ENCODE measurements at regions of chr1 and their contacts with region 1.

Region 1: GRCh38 chr1:30984165-30984889 is 75.8 kb upstream of the SDC3 start:
- DNase-seq: no peak
- ATAC-seq: no peak
- H3K4me3 ChIP-seq: no peak overlapping the region
- H3K4me3 Mint-ChIP-seq: no peak overlapping the region
- H3K27ac ChIP-seq: no peak overlapping the region
- H3K27ac Mint-ChIP-seq: no peak overlapping the region
- H3K4me1 ChIP-seq: peaks cover 8% of the 10 kb centered on the region
- H3K4me1 Mint-ChIP-seq: peaks cover 64% of the 10 kb centered on the region
- H3K27me3 ChIP-seq: no peaks in the 10 kb centered on the region
- H3K27me3 Mint-ChIP-seq: no peaks in the 10 kb centered on the region
- CTCF ChIP-seq: no peak

Region 2: GRCh38 chr1:30966690-30967369 is 17.5 kb before region 1 on chr1:
- CTCF ChIA-PET with region 1: no interaction called
- POLR2A ChIA-PET with region 1: no interaction called
- intact Hi-C with region 1: loop called in 1 of 2 experiments (anchors 2 kb)
- DNase-seq: no peak
- ATAC-seq: no peak
- H3K4me3 ChIP-seq: no peak overlapping the region
- H3K4me3 Mint-ChIP-seq: no peak overlapping the region
- H3K27ac ChIP-seq: no peak overlapping the region
- H3K27ac Mint-ChIP-seq: no peak overlapping the region
- H3K4me1 ChIP-seq: no peaks in the 10 kb centered on the region
- H3K4me1 Mint-ChIP-seq: peaks cover 22% of the 10 kb centered on the region
- H3K27me3 ChIP-seq: no peaks in the 10 kb centered on the region
- H3K27me3 Mint-ChIP-seq: no peaks in the 10 kb centered on the region
- CTCF ChIP-seq: no peak

Region 3: GRCh38 chr1:31010086-31010989 is 26.0 kb after region 1 on chr1:
- CTCF ChIA-PET with region 1: no interaction called
- POLR2A ChIA-PET with region 1: no interaction called
- intact Hi-C with region 1: no loop called
- DNase-seq: peak in 3 of 9 experiments; percentile 6 to 37 (median 8)
- ATAC-seq: peak; percentile 84
- H3K4me3 ChIP-seq: no peak overlapping the region
- H3K4me3 Mint-ChIP-seq: no peak overlapping the region
- H3K27ac ChIP-seq: no peak overlapping the region
- H3K27ac Mint-ChIP-seq: peak overlapping the region; percentile 78
- H3K4me1 ChIP-seq: peaks cover 43% of the 10 kb centered on the region
- H3K4me1 Mint-ChIP-seq: peaks cover 78% of the 10 kb centered on the region
- H3K27me3 ChIP-seq: no peaks in the 10 kb centered on the region
- H3K27me3 Mint-ChIP-seq: no peaks in the 10 kb centered on the region
- CTCF ChIP-seq: no peak

Region 4: DNA sequence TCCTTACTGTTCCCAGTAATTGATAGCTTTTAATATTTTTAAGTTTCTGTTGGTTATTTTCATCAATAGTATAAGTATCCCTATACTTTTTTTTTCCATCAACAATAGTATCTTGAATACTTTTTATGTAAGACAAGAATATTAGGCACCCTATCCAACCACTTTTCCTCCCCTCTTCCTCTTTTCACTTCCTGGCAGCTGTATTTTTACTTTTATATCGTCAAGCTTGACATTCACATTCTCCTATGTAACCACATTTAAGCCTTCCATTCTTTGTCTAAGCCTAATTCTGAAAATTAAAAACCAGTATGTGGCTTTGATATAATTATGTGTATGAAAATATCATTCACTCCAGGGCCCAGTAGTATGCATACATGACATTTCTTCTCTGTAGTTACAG is 1097.7 kb after region 1 on chr1:
- CTCF ChIA-PET with region 1: no interaction called
- POLR2A ChIA-PET with region 1: no interaction called
- intact Hi-C with region 1: no loop called
- DNase-seq: no peak
- ATAC-seq: no peak
- H3K4me3 ChIP-seq: no peak overlapping the region
- H3K4me3 Mint-ChIP-seq: no peak overlapping the region
- H3K27ac ChIP-seq: no peak overlapping the region
- H3K27ac Mint-ChIP-seq: peak overlapping the region; percentile 47
- H3K4me1 ChIP-seq: no peaks in the 10 kb centered on the region
- H3K4me1 Mint-ChIP-seq: peaks cover 3% of the 10 kb centered on the region
- H3K27me3 ChIP-seq: no peaks in the 10 kb centered on the region
- H3K27me3 Mint-ChIP-seq: no peaks in the 10 kb centered on the region
- CTCF ChIP-seq: no peak

Measured in CD8-positive, alpha-beta T cell (primary cell).